ENCODE measurements at regions of chr6 and their contacts with region 1.

Region 1: DNA sequence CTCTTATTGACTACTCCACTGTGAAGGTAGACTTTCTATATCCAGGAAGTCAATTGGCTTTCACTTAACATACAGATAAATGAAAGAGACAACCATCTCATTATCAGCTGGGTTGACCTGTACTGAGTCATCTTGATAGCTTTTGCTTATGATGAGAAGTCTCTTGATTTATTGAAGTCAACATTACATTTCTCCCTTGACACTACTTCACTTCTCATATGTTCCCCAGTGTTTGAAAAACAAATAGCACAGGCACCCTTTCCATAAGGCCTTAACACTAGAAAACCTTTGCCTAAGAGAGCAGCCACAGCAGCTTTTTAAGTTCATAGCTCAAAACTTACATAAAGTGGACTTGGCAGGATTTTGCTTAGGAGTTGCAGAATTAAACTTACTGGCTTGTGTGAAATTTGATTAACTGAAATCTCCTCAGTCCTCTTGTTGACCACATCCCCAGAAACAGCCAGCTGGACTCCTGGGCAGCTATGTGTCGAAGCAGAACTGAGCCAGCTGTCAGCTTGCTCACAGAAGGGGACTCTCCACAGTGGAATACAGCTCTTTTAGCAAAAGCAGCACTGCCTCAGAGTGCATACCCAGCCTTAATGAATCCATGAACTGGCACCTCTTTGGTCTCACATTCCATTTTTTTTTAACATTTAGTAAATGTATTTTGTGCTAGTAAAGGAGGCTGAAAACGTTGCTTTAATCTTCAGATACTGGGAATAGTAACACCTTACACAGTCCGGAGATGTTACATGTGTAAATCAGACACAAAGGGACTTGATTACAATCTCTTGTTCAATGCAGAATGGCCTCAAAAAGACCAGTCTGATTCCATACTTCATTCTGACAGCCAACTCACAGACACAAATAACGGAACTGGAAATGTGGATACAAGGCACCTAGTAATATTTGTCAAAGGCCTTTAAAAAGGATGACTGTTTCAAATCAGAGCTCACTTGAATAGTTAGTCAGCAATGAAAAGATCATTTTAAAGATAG is 1532.7 kb downstream of the HACE1 start:
- DNase-seq: no peak
- ATAC-seq: no peak
- H3K4me3 ChIP-seq: no peak overlapping the region
- H3K4me3 Mint-ChIP-seq: no peak overlapping the region
- H3K27ac ChIP-seq: no peak overlapping the region
- H3K27ac Mint-ChIP-seq: no peak overlapping the region
- H3K4me1 ChIP-seq: no peaks in the 10 kb centered on the region
- H3K4me1 Mint-ChIP-seq: no peaks in the 10 kb centered on the region
- H3K27me3 ChIP-seq: no peaks in the 10 kb centered on the region
- H3K27me3 Mint-ChIP-seq: no peaks in the 10 kb centered on the region

Region 2: DNA sequence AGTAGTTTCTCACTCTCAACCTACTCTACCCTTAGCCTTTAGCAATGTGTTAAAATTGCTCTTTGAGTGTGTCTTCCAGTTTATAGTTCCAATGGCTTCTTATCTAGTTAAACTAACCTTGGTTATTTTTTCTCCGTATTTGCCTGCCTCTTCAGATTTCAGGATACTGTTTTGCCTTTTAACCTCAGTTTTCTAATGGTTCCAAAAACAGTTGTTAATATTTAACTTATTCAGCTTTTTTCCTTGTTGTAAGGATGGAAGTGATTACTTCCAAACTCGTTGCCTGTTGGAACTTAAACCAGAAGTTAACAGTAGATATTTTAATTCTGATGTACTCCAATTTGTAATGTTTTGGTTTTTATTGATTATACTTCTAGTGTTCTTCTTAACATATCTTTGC is 42.2 kb before region 1 on chr6:
- CTCF ChIA-PET with region 1: no interaction called
- POLR2A ChIA-PET with region 1: no interaction called
- intact Hi-C with region 1: loop called in 1 of 2 experiments (anchors 5 kb)
- DNase-seq: no peak
- ATAC-seq: no peak
- H3K4me3 ChIP-seq: no peak overlapping the region
- H3K4me3 Mint-ChIP-seq: no peak overlapping the region
- H3K27ac ChIP-seq: no peak overlapping the region
- H3K27ac Mint-ChIP-seq: no peak overlapping the region
- H3K4me1 ChIP-seq: no peaks in the 10 kb centered on the region
- H3K4me1 Mint-ChIP-seq: no peaks in the 10 kb centered on the region
- H3K27me3 ChIP-seq: no peaks in the 10 kb centered on the region
- H3K27me3 Mint-ChIP-seq: no peaks in the 10 kb centered on the region